Dorsolateral prefrontal cortex (tissue), 120 donors: ENCODE measurements at regions of chr4 and their contacts with region 1.

Region 1: DNA sequence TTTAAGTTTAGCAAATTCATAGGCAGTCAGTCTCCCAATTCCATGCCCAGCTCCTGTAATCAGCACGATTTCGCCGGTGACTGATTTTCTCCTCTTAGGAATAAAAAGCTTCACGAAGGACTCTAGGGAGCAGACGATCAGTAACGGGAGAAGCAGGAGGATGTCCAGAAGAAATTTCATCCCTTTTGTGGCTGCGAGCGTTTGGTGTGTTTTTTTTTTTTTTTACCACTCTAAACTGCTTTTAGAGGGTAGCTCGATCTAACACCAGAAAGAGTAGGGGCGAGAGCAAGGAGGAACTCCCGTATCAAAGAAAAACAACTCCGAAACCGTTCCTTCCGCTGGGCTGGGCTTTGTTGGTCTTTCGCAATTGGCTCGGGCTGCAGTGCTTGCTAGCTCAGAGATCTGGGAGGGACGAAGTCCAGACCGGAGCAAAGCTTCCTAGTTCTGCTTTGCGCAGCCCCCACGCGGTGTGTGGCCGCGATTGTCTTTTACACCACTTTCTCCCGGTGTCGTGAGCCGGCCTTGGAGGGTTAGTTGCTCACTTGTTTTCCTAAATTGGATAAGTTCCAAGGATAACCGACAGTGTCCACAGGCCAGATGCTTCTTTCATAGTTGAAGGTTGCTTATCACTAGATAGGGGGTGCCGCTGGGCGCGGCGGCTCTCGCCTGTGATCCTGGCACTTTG is at the start of gene HSD17B11:
- DNase-seq: peak; percentile 62 to 90 (median 86)
- H3K4me3 ChIP-seq: peak within 1 kb of the TSS; percentile 45 to 91 (median 72)
- H3K27ac ChIP-seq: peak within 1 kb of the TSS; percentile 48 to 96 (median 89)
- H3K27me3 ChIP-seq: no peaks in the 10 kb centered on the region
- CTCF ChIP-seq: peak in 49 of 56 donors; percentile 9 to 64 (median 41)
- total RNA-seq, gene HSD17B11: 16.0 to 50.7 (median 26.3) TPM

Region 2: DNA sequence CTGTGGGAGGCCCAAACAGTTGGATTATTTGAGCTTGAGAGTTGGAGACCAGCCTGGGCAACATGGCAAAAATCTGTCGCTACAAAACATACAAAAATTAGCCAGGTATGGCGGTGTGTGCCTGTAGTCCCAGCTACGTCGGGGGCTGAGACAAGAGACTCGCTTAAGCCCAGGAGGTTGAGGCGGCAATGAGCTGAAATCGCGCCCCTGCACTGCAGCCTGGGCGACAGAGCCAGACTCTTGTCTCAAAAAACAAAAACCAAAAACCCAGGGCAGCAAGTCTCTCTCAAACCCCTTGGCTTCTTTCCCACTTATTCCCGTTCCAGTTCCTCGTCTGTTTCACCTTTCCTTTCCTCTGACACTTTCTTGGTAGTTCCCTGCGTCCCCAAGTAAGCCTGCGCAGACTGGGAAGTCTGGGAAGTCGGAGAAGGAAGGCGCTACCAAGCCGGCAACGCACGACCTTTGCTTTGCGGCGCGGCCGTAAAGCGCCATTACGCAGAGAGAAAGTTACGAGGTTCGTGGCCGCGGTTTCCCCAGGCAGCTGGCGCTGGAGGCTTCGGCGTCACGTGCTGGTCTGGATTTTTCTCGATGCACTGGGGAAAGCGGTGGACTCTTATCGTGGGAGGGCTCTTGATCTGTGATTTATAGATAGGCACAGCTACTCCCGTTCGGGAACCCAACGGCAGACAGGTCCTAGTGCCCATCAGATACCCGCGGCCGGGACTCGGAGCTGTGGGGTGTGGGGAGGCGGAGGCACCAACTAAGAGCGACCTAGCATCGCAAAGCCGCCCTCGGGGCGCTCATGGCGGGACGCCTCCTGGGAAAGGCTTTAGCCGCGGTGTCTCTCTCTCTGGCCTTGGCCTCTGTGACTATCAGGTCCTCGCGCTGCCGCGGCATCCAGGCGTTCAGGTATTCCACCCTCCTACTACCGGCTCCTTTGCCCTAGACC is 31.3 kb after region 1 on chr4 and contains the start of gene NUDT9:
- intact Hi-C with region 1: loop called (anchors 1 kb)
- DNase-seq: peak; percentile 90 to 96 (median 94)
- H3K4me3 ChIP-seq: peak within 1 kb of the TSS; percentile 58 to 99 (median 89)
- H3K27ac ChIP-seq: peak within 1 kb of the TSS; percentile 72 to 98 (median 92)
- H3K27me3 ChIP-seq: no peaks in the 10 kb centered on the region
- CTCF ChIP-seq: peak in 37 of 56 donors; percentile 2 to 53 (median 26)
- total RNA-seq, gene NUDT9: 21.4 to 53.9 (median 34.4) TPM

Region 3: GRCh38 chr4:88017516-88018297 is 626.7 kb after region 1 on chr4:
- intact Hi-C with region 1: no loop called
- DNase-seq: no peak
- H3K4me3 ChIP-seq: peak overlapping the region in 7 of 59 donors; percentile 6 to 29 (median 22)
- H3K27ac ChIP-seq: peak overlapping the region in 46 of 59 donors; percentile 9 to 77 (median 52)
- H3K27me3 ChIP-seq: no peaks in the 10 kb centered on the region
- CTCF ChIP-seq: no peak